ENCODE measurements at regions of chr3 and their contacts with region 1.

Region 1: GRCh38 chr3:119322835-119323722 is 28.9 kb downstream of the ARHGAP31 start:
- DNase-seq: peak; percentile 77 to 96 (median 81)
- ATAC-seq: peak; percentile 90
- H3K4me3 ChIP-seq: peak overlapping the region; percentile 65
- H3K4me3 Mint-ChIP-seq: peak overlapping the region; percentile 84 to 96 (median 90)
- H3K27ac ChIP-seq: peak overlapping the region; percentile 81
- H3K27ac Mint-ChIP-seq: peak overlapping the region; percentile 90 to 99 (median 95)
- H3K4me1 ChIP-seq: peaks cover 10 to 14% of the 10 kb centered on the region in 2 donors
- H3K4me1 Mint-ChIP-seq: peaks cover 12 to 30% (median 21%) of the 10 kb centered on the region in 7 donors
- H3K27me3 ChIP-seq: no peaks in the 10 kb centered on the region
- H3K27me3 Mint-ChIP-seq: peaks cover 0 to 57% (median 0%) of the 10 kb centered on the region in 5 donors

Region 2: GRCh38 chr3:119293871-119294695 is 29.0 kb before region 1 on chr3 and contains the start of gene ARHGAP31:
- CTCF ChIA-PET with region 1: interaction called, 5 read pairs
- POLR2A ChIA-PET with region 1: interaction called, 24 read pairs
- intact Hi-C with region 1: loop called (anchors 1 kb)
- DNase-seq: peak; percentile 70 to 91 (median 86)
- ATAC-seq: peak; percentile 77
- H3K4me3 ChIP-seq: peak within 1 kb of the TSS; percentile 50
- H3K4me3 Mint-ChIP-seq: peak within 1 kb of the TSS; percentile 68 to 95 (median 90)
- H3K27ac ChIP-seq: peak within 1 kb of the TSS; percentile 91
- H3K27ac Mint-ChIP-seq: peak within 1 kb of the TSS; percentile 71 to 99 (median 92)
- H3K4me1 ChIP-seq: peaks cover 22 to 26% of the 10 kb centered on the region in 2 donors
- H3K4me1 Mint-ChIP-seq: peaks cover 26 to 74% (median 63%) of the 10 kb centered on the region in 7 donors
- H3K27me3 ChIP-seq: no peaks in the 10 kb centered on the region
- H3K27me3 Mint-ChIP-seq: peaks cover 0 to 43% (median 0%) of the 10 kb centered on the region in 5 donors
- total RNA-seq, gene ARHGAP31: 3.0 to 11.9 (median 3.1) TPM

Region 3: DNA sequence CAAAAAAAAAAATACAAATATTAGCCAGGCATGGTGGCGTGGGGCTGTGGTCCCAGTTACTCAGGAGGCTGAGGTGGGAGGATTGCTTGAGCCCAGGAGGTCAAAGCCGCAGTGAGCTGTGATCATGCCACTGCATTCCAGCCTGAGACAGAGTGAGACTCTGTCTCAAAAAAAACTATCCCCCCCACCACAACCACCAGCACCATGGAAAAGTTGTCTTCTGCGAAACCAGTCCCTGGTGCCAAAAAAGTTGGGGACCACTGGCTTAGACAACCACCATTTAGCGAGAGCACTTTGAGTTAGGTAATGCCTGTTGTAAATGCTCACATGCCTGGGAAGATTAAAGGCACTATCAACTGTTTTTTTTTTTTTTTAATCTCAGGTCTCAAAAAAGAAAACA is 13.5 kb before region 1 on chr3:
- CTCF ChIA-PET with region 1: no interaction called
- POLR2A ChIA-PET with region 1: no interaction called
- intact Hi-C with region 1: loop called in 1 of 2 experiments (anchors 1 kb)
- DNase-seq: no peak
- ATAC-seq: no peak
- H3K4me3 ChIP-seq: no peak overlapping the region
- H3K4me3 Mint-ChIP-seq: no peak overlapping the region
- H3K27ac ChIP-seq: no peak overlapping the region
- H3K27ac Mint-ChIP-seq: no peak overlapping the region
- H3K4me1 ChIP-seq: no peaks in the 10 kb centered on the region
- H3K4me1 Mint-ChIP-seq: peaks cover 0 to 15% (median 5%) of the 10 kb centered on the region in 7 donors
- H3K27me3 ChIP-seq: no peaks in the 10 kb centered on the region
- H3K27me3 Mint-ChIP-seq: peaks cover 0 to 23% (median 0%) of the 10 kb centered on the region in 5 donors

Region 4: GRCh38 chr3:120203016-120203415 is 879.9 kb after region 1 on chr3:
- CTCF ChIA-PET with region 1: no interaction called
- POLR2A ChIA-PET with region 1: no interaction called
- intact Hi-C with region 1: no loop called
- DNase-seq: no peak
- ATAC-seq: peak; percentile 44
- H3K4me3 ChIP-seq: no peak overlapping the region
- H3K4me3 Mint-ChIP-seq: no peak overlapping the region
- H3K27ac ChIP-seq: no peak overlapping the region
- H3K27ac Mint-ChIP-seq: no peak overlapping the region
- H3K4me1 ChIP-seq: no peaks in the 10 kb centered on the region
- H3K4me1 Mint-ChIP-seq: no peaks in the 10 kb centered on the region
- H3K27me3 ChIP-seq: no peaks in the 10 kb centered on the region
- H3K27me3 Mint-ChIP-seq: peaks cover 0 to 4% (median 0%) of the 10 kb centered on the region in 5 donors

Measured in naive thymus-derived CD4-positive, alpha-beta T cell (primary cell).